Adrenal gland (tissue), 19 donors: ENCODE measurements at regions of chr1 and their contacts with region 1.

Region 1: GRCh38 chr1:77533660-77534305 is 148.7 kb downstream of the ZZZ3 start:
- DNase-seq: peak; percentile 47 to 74 (median 60)
- H3K4me3 ChIP-seq: no peak overlapping the region
- H3K27ac ChIP-seq: no peak overlapping the region
- H3K4me1 ChIP-seq: peaks cover 0 to 5% of the 10 kb centered on the region in 2 donors
- H3K27me3 ChIP-seq: no peaks in the 10 kb centered on the region
- CTCF ChIP-seq: peak; percentile 79 to 90 (median 82)
- POLR2A ChIP-seq: no peak

Region 2: DNA sequence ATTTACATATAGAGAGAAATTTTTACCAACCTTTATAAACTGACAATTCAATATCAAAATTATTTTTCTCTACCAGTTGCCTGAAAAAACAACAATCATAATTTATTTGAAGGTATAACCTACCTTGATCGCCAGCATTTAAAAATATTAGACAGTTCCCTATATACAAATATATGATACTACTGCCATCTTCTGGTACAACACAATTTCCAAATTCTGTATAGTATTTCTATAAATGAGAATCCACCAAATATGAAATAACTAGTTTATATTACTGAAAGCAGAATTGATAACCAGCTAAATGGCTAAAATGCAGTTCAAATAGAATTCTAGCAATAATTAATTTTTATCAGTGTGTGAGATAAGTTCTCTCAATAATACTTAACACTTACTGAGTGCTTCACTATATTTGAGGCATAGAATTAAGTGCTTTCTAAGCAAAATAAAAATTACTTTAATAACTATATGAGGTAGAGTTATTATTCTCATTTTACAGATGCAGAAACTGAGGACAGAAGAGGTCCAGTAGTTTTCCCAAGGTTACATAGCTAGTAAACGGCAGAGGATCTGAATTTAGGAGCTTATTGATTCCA is 390.2 kb before region 1 on chr1:
- intact Hi-C with region 1: loop called (anchors 5 to 10 kb)
- DNase-seq: no peak
- H3K4me3 ChIP-seq: no peak overlapping the region
- H3K27ac ChIP-seq: no peak overlapping the region
- H3K4me1 ChIP-seq: no peaks in the 10 kb centered on the region
- H3K27me3 ChIP-seq: no peaks in the 10 kb centered on the region
- CTCF ChIP-seq: peak in 5 of 6 experiments; percentile 10 to 45 (median 22)
- POLR2A ChIP-seq: no peak

Region 3: DNA sequence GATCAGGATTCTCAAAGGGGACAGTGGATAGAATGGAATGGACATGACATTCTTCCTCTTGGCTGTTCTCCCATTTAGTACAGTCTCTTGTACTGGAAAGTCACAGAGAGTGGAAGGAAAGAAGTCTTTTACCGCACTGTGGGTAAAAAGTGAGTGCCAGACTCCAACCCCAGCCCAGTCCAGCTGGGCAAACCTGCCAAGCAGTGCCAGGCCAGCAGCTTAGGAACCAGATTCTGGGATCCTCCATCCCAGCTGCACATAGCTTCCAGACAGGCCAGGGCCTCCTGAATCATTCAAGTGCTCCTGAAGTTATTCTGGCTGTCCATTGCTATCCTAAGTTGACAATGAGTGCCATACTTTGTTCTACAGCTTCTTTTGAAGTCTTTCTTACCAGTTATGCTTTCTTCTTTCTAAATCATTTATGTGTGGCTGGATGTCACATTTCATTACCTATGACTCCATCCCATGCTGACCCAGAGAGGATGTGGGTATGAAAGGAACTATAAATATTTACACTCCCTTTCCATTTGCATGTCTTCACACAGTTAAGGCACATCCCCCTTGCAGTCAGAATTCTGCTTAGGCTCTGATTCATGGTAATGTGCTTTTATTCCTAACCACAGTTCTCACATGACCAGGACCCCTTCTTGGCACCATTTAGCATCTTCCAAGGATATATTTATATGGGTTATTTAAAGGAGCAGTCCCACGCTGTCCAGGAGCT is 163.0 kb before region 1 on chr1:
- intact Hi-C with region 1: no loop called
- DNase-seq: no peak
- H3K4me3 ChIP-seq: no peak overlapping the region
- H3K27ac ChIP-seq: no peak overlapping the region
- H3K4me1 ChIP-seq: no peaks in the 10 kb centered on the region
- H3K27me3 ChIP-seq: no peaks in the 10 kb centered on the region
- CTCF ChIP-seq: no peak
- POLR2A ChIP-seq: no peak

Region 4: GRCh38 chr1:77446841-77447555 is 86.8 kb before region 1 on chr1:
- intact Hi-C with region 1: no loop called
- DNase-seq: no peak
- H3K4me3 ChIP-seq: no peak overlapping the region
- H3K27ac ChIP-seq: no peak overlapping the region
- H3K4me1 ChIP-seq: no peaks in the 10 kb centered on the region
- H3K27me3 ChIP-seq: no peaks in the 10 kb centered on the region
- CTCF ChIP-seq: no peak
- POLR2A ChIP-seq: no peak